Activated CD4-positive, alpha-beta T cell treated with anti-CD3 and anti-CD28 coated beads for 36 hours (primary cell): ENCODE measurements at regions of chr4 and their contacts with region 1.

Region 1: GRCh38 chr4:108160741-108161352 is 7.9 kb downstream of the LEF1 start:
- DNase-seq: no peak
- ATAC-seq: peak; percentile 33
- H3K4me3 Mint-ChIP-seq: peak overlapping the region; percentile 56
- H3K27ac Mint-ChIP-seq: peak overlapping the region; percentile 87
- H3K4me1 Mint-ChIP-seq: peaks cover 61% of the 10 kb centered on the region
- H3K27me3 Mint-ChIP-seq: no peaks in the 10 kb centered on the region

Region 2: GRCh38 chr4:108094923-108095482 is 65.8 kb before region 1 on chr4:
- CTCF ChIA-PET with region 1: interaction called, 4 read pairs
- POLR2A ChIA-PET with region 1: interaction called, 11 read pairs
- intact Hi-C with region 1: no loop called
- DNase-seq: no peak
- ATAC-seq: peak; percentile 45
- H3K4me3 Mint-ChIP-seq: no peak overlapping the region
- H3K27ac Mint-ChIP-seq: peak overlapping the region; percentile 81
- H3K4me1 Mint-ChIP-seq: peaks cover 86% of the 10 kb centered on the region
- H3K27me3 Mint-ChIP-seq: no peaks in the 10 kb centered on the region

Region 3: GRCh38 chr4:108148316-108148715 is 12.5 kb before region 1 on chr4:
- CTCF ChIA-PET with region 1: interaction called, 7 read pairs
- POLR2A ChIA-PET with region 1: interaction called, 6 read pairs
- intact Hi-C with region 1: loop called (anchors 1 to 2 kb)
- DNase-seq: peak; percentile 69
- ATAC-seq: peak; percentile 66
- H3K4me3 Mint-ChIP-seq: peak overlapping the region; percentile 37
- H3K27ac Mint-ChIP-seq: peak overlapping the region; percentile 83
- H3K4me1 Mint-ChIP-seq: peaks cover 89% of the 10 kb centered on the region
- H3K27me3 Mint-ChIP-seq: no peaks in the 10 kb centered on the region